HCT116 (cell line): ENCODE measurements at regions of chr11 and their contacts with region 1.

Region 1: GRCh38 chr11:46238967-46239800 is 38.3 kb upstream of the CREB3L1 start:
- DNase-seq: peak; percentile 62
- ATAC-seq: peak; percentile 70
- H3K4me3 ChIP-seq: peak overlapping the region; percentile 53 to 59
- H3K27ac ChIP-seq: peak overlapping the region; percentile 70; the same call in 1 of the 2 replicates
- H3K4me1 ChIP-seq: peaks cover 32 to 68% of the 10 kb centered on the region in 2 experiments
- H3K27me3 ChIP-seq: no peaks in the 10 kb centered on the region
- CTCF ChIP-seq: peak in 2 of 3 experiments; percentile 90 to 98; a peak in 4 of 6 replicates
- POLR2A ChIP-seq: no peak
- RAD21 ChIP-seq: no peak

Region 2: DNA sequence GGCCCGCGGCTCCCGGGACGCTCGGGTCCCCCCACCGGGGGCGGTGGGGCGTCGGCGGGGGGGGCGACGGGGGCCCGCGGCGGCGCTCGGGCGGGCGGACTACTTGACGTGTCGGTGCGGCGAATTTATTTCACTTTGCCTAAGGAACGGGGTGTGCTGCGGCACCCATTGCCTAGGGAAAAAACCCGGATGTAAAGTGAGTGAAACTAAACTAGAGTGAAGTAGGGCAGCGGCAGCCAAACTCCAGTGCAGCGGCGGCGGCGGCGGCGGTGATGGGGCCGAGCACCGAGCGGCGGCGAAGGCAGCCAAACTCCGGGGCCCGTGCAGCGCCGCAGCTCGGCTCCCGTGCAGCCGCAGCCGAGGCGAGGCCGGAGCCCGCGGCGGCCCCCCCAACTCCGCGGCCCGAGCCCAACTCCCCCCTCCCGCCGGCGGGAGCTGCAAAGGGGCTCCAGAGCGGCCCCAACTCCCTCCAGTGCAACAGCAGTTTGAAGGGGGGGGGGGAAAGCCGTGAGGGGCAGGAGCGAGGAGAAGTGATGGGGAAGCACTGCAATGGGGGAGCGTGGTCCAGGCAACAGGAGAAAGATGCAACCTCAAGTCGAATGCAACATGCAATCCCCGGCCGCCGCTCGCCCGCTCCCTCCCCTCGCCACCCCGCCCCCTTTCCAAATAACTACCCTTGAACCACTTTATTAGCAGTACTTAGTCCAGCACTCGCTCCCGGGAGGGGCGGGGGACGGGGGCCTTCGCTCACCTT is 117.3 kb before region 1 on chr11:
- CTCF ChIA-PET with region 1: interaction called, 3 read pairs
- POLR2A ChIA-PET with region 1: interaction called, 4 read pairs
- RAD21 ChIA-PET with region 1: no interaction called
- intact Hi-C with region 1: loop called (anchors 1 kb)
- DNase-seq: peak; percentile 87
- ATAC-seq: peak; percentile 57
- H3K4me3 ChIP-seq: peak overlapping the region; percentile 66 to 71
- H3K27ac ChIP-seq: peak overlapping the region; percentile 89
- H3K4me1 ChIP-seq: peaks cover 12 to 24% of the 10 kb centered on the region in 2 experiments; a peak in 3 of 4 replicates
- H3K27me3 ChIP-seq: no peaks in the 10 kb centered on the region
- CTCF ChIP-seq: no peak
- POLR2A ChIP-seq: peak; percentile 34
- RAD21 ChIP-seq: no peak

Region 3: GRCh38 chr11:46127150-46127638 is 112.0 kb before region 1 on chr11:
- CTCF ChIA-PET with region 1: interaction called, 3 read pairs
- POLR2A ChIA-PET with region 1: interaction called, 4 read pairs
- RAD21 ChIA-PET with region 1: no interaction called
- intact Hi-C with region 1: loop called (anchors 2 kb)
- DNase-seq: peak; percentile 84
- ATAC-seq: peak; percentile 99
- H3K4me3 ChIP-seq: no peak overlapping the region
- H3K27ac ChIP-seq: peak overlapping the region; percentile 9; the same call in 1 of the 2 replicates
- H3K4me1 ChIP-seq: peaks cover 11 to 26% of the 10 kb centered on the region in 2 experiments; a peak in 3 of 4 replicates
- H3K27me3 ChIP-seq: no peaks in the 10 kb centered on the region
- CTCF ChIP-seq: peak; percentile 68 to 79 (median 79); a peak in 5 of 6 replicates
- POLR2A ChIP-seq: peak; percentile 41
- RAD21 ChIP-seq: peak; percentile 71

Region 4: DNA sequence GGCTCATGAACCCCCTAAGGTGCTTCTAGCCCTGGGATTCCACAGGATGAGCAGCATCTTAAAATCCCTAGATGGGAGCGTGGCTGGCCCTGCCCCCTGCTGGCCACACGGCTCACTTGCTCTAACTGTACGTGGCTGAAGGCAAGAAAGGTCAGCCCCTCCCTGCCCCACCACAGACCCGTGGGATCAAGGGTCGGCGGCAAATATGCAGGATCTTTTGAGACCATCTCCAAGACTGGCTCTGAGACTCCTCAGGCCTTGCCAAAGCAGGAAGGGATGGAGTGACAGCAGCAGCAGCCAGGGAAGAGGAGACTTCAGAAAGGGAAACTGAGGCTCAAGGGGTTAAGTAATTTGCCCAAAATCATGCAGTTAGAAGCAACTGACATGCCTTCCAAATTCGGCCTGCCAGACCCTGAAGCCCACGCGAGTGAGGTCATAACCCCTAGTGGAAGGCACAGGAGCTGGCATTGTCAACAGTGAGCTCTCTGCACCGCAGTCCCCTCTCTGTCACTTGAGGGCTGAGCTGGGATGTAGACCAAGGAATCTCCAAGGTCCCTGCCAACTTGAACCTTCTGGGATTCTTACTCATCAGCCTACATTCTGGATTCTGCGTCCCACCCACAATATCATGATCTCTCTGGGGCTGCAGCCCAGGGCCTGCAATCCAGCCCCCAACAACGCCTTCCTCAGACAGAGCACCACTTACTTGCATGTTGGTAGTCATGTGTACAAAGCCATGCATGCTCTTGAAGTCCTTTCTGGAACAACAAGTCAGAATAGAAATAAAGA is 69.6 kb after region 1 on chr11:
- CTCF ChIA-PET with region 1: interaction called, 56 read pairs
- POLR2A ChIA-PET with region 1: interaction called, 13 read pairs
- RAD21 ChIA-PET with region 1: interaction called, 4 read pairs
- intact Hi-C with region 1: no loop called
- DNase-seq: peak; percentile 48
- ATAC-seq: peak; percentile 82
- H3K4me3 ChIP-seq: no peak overlapping the region
- H3K27ac ChIP-seq: no peak overlapping the region
- H3K4me1 ChIP-seq: peaks cover 6 to 32% of the 10 kb centered on the region in 2 experiments
- H3K27me3 ChIP-seq: no peaks in the 10 kb centered on the region
- CTCF ChIP-seq: peak; percentile 85 to 96 (median 93)
- POLR2A ChIP-seq: no peak
- RAD21 ChIP-seq: peak; percentile 92

Region 5: DNA sequence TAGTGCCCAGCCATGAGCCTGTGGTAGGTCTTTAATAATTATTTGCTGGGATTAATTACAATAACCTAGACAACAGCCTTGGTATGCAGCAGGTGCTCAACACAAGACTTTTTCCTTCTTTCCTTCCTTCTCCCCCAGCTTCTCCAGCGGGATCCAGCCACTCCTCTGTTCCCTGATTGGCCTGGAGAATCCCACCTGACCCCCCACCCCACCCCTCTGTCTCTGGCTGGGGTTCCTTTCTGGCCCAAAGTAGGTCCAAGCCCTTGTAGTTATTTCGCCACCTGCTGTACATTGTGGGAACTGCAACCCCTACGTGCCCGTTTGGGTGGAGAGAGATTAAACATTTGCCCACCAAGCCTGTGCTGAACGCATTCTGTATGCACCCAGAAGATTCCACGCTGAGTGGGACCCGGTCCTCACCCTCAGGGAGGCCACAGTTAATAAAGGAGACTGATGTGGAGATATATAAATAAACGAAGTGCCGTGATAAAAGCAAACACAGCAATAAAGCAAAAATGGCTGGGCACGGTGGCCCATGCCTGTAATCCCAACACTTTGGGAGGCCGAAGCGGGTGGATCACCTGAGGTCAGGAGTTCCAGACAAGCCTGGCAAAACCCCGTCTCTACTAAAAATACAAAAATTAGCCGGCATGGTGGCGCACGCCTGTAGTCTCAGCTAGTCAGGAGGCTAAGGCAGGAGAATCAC is 76.0 kb after region 1 on chr11:
- CTCF ChIA-PET with region 1: interaction called, 56 read pairs
- POLR2A ChIA-PET with region 1: interaction called, 13 read pairs
- RAD21 ChIA-PET with region 1: interaction called, 3 to 4 read pairs
- intact Hi-C with region 1: loop called (anchors 1 kb)
- DNase-seq: peak; percentile 86
- ATAC-seq: peak; percentile 97
- H3K4me3 ChIP-seq: no peak overlapping the region
- H3K27ac ChIP-seq: no peak overlapping the region
- H3K4me1 ChIP-seq: peaks cover 5 to 15% of the 10 kb centered on the region in 2 experiments; a peak in 3 of 4 replicates
- H3K27me3 ChIP-seq: no peaks in the 10 kb centered on the region
- CTCF ChIP-seq: peak; percentile 78 to 99 (median 98)
- POLR2A ChIP-seq: no peak
- RAD21 ChIP-seq: peak; percentile 81

Region 6: GRCh38 chr11:46537537-46538295 is 298.5 kb after region 1 on chr11:
- CTCF ChIA-PET with region 1: no interaction called
- POLR2A ChIA-PET with region 1: no interaction called
- RAD21 ChIA-PET with region 1: no interaction called
- intact Hi-C with region 1: loop called (anchors 5 kb)
- DNase-seq: peak; percentile 68
- ATAC-seq: peak; percentile 97
- H3K4me3 ChIP-seq: no peak overlapping the region
- H3K27ac ChIP-seq: no peak overlapping the region
- H3K4me1 ChIP-seq: peaks cover 0 to 7% of the 10 kb centered on the region in 2 experiments; a peak in 1 of 4 replicates
- H3K27me3 ChIP-seq: no peaks in the 10 kb centered on the region
- CTCF ChIP-seq: peak; percentile 80 to 97 (median 97)
- POLR2A ChIP-seq: no peak
- RAD21 ChIP-seq: peak; percentile 82

Region 7: GRCh38 chr11:46616998-46617675 is 378.0 kb after region 1 on chr11 and contains the starts of genes ATG13 and HARBI1:
- CTCF ChIA-PET with region 1: interaction called, 4 read pairs
- POLR2A ChIA-PET with region 1: no interaction called
- RAD21 ChIA-PET with region 1: no interaction called
- intact Hi-C with region 1: loop called (anchors 5 kb)
- DNase-seq: peak; percentile 82
- ATAC-seq: peak; percentile 95
- H3K4me3 ChIP-seq: peak within 1 kb of the TSS; percentile 71 to 99
- H3K27ac ChIP-seq: peak within 1 kb of the TSS; percentile 73
- H3K4me1 ChIP-seq: peaks cover 13 to 23% of the 10 kb centered on the region in 2 experiments
- H3K27me3 ChIP-seq: no peaks in the 10 kb centered on the region
- CTCF ChIP-seq: no peak
- POLR2A ChIP-seq: peak; percentile 14
- RAD21 ChIP-seq: no peak; the same call in 1 of the 2 replicates
- total RNA-seq, gene ATG13: 69.2 TPM
- total RNA-seq, gene HARBI1: 1.9 TPM